Naive thymus-derived CD4-positive, alpha-beta T cell (primary cell): ENCODE measurements at regions of chr3 and their contacts with region 1.

Region 1: DNA sequence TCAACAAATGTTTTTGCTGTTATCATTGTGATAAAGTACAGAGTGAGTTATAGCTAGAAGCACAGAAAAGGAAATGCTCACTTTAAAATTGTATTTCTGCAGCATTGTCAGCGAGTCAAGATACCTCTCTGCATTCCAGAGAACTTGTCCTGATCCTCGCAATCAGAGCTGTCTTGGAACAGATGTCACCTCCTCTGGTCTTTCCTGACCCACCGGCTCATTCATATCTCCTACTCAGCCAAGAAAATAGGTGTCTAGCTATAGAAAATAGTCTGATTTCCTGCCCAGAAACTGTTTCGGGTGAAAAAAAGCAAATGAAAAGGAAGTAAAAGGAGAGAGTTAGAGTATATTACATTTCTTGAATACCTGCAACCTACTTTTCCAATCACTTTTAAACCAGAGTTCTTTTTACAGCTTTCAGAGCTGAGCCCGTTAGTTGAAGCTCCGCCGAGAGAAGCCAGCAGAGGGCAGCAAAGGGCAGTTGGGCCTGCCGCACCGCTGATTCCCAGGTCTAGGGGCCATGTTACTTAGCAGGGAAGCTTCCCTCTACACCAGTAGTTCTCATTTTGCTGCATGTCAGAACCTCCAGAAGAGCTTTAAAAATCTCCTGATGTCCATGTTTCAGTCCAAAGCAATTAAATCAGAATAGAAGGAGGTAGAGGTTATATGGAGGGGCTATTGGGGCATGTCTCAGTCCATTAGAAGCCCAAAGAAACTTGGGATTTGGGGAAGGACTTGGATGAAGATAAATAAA is 185.7 kb upstream of the THRB start:
- DNase-seq: peak in 6 of 9 donors; percentile 2 to 56 (median 8)
- ATAC-seq: peak; percentile 67
- H3K4me3 ChIP-seq: no peak overlapping the region
- H3K4me3 Mint-ChIP-seq: no peak overlapping the region
- H3K27ac ChIP-seq: no peak overlapping the region
- H3K27ac Mint-ChIP-seq: no peak overlapping the region
- H3K4me1 ChIP-seq: no peaks in the 10 kb centered on the region
- H3K4me1 Mint-ChIP-seq: peaks cover 0 to 12% (median 0%) of the 10 kb centered on the region in 7 donors
- H3K27me3 ChIP-seq: no peaks in the 10 kb centered on the region
- H3K27me3 Mint-ChIP-seq: peaks cover 6 to 52% (median 11%) of the 10 kb centered on the region in 5 donors

Region 2: GRCh38 chr3:23999012-23999641 is 681.3 kb before region 1 on chr3:
- CTCF ChIA-PET with region 1: no interaction called
- POLR2A ChIA-PET with region 1: no interaction called
- intact Hi-C with region 1: loop called (anchors 5 kb)
- DNase-seq: peak in 8 of 9 donors; percentile 24 to 64 (median 29)
- ATAC-seq: peak; percentile 49
- H3K4me3 ChIP-seq: no peak overlapping the region
- H3K4me3 Mint-ChIP-seq: no peak overlapping the region
- H3K27ac ChIP-seq: no peak overlapping the region
- H3K27ac Mint-ChIP-seq: no peak overlapping the region
- H3K4me1 ChIP-seq: no peaks in the 10 kb centered on the region
- H3K4me1 Mint-ChIP-seq: peaks cover 0 to 6% (median 4%) of the 10 kb centered on the region in 7 donors
- H3K27me3 ChIP-seq: no peaks in the 10 kb centered on the region
- H3K27me3 Mint-ChIP-seq: peaks cover 0 to 20% (median 3%) of the 10 kb centered on the region in 5 donors

Region 3: GRCh38 chr3:24004171-24004938 is 676.0 kb before region 1 on chr3:
- CTCF ChIA-PET with region 1: no interaction called
- POLR2A ChIA-PET with region 1: no interaction called
- intact Hi-C with region 1: loop called (anchors 5 kb)
- DNase-seq: no peak
- ATAC-seq: no peak
- H3K4me3 ChIP-seq: no peak overlapping the region
- H3K4me3 Mint-ChIP-seq: no peak overlapping the region
- H3K27ac ChIP-seq: no peak overlapping the region
- H3K27ac Mint-ChIP-seq: no peak overlapping the region
- H3K4me1 ChIP-seq: no peaks in the 10 kb centered on the region
- H3K4me1 Mint-ChIP-seq: peaks cover 0 to 4% (median 0%) of the 10 kb centered on the region in 7 donors
- H3K27me3 ChIP-seq: no peaks in the 10 kb centered on the region
- H3K27me3 Mint-ChIP-seq: peaks cover 0 to 13% (median 0%) of the 10 kb centered on the region in 5 donors

Region 4: GRCh38 chr3:24185738-24186384 is 494.5 kb before region 1 on chr3:
- CTCF ChIA-PET with region 1: no interaction called
- POLR2A ChIA-PET with region 1: no interaction called
- intact Hi-C with region 1: loop called in 1 of 2 experiments (anchors 10 kb)
- DNase-seq: peak in 3 of 9 donors; percentile 2 to 10 (median 3)
- ATAC-seq: peak; percentile 38
- H3K4me3 ChIP-seq: no peak overlapping the region
- H3K4me3 Mint-ChIP-seq: no peak overlapping the region
- H3K27ac ChIP-seq: no peak overlapping the region
- H3K27ac Mint-ChIP-seq: no peak overlapping the region
- H3K4me1 ChIP-seq: no peaks in the 10 kb centered on the region
- H3K4me1 Mint-ChIP-seq: no peaks in the 10 kb centered on the region
- H3K27me3 ChIP-seq: no peaks in the 10 kb centered on the region
- H3K27me3 Mint-ChIP-seq: peaks cover 0 to 2% (median 0%) of the 10 kb centered on the region in 5 donors

Region 5: GRCh38 chr3:24264748-24265158 is 415.6 kb before region 1 on chr3:
- CTCF ChIA-PET with region 1: no interaction called
- POLR2A ChIA-PET with region 1: no interaction called
- intact Hi-C with region 1: loop called in 1 of 2 experiments (anchors 2 kb)
- DNase-seq: no peak
- ATAC-seq: no peak
- H3K4me3 ChIP-seq: no peak overlapping the region
- H3K4me3 Mint-ChIP-seq: no peak overlapping the region
- H3K27ac ChIP-seq: no peak overlapping the region
- H3K27ac Mint-ChIP-seq: no peak overlapping the region
- H3K4me1 ChIP-seq: no peaks in the 10 kb centered on the region
- H3K4me1 Mint-ChIP-seq: no peaks in the 10 kb centered on the region
- H3K27me3 ChIP-seq: no peaks in the 10 kb centered on the region
- H3K27me3 Mint-ChIP-seq: peaks cover 3 to 18% (median 12%) of the 10 kb centered on the region in 5 donors

Region 6: DNA sequence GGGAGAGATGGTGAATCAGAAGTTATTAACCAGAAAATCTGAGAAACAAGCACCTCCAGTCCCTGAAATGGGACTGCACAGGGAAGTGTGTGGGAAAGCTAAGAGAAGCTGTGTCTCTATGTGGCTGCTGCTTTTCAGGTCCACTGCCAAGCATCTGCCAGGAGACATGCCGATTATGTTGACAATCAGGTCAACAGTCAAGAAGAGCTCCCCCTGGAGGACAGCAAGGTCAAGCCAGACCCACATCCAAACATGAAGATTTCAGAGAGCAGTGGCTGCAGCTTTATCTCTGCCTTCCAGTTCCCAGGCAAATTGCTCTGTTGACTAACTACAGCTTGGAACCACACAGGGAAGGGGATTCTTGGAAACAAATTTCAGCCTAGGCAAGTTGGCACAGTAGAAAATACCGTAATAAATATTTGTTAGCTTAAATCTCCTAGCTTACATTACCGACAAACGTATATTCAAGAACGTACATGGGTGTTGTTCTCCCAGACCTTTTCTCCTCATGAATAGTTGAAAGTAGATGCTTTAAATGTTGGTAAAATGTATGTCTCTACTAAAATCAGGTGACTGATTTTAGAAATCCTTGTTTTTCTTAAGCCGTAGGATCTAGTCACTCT is 353.1 kb after region 1 on chr3:
- CTCF ChIA-PET with region 1: no interaction called
- POLR2A ChIA-PET with region 1: no interaction called
- intact Hi-C with region 1: loop called in 1 of 2 experiments (anchors 5 kb)
- DNase-seq: no peak
- ATAC-seq: no peak
- H3K4me3 ChIP-seq: no peak overlapping the region
- H3K4me3 Mint-ChIP-seq: no peak overlapping the region
- H3K27ac ChIP-seq: no peak overlapping the region
- H3K27ac Mint-ChIP-seq: no peak overlapping the region
- H3K4me1 ChIP-seq: no peaks in the 10 kb centered on the region
- H3K4me1 Mint-ChIP-seq: no peaks in the 10 kb centered on the region
- H3K27me3 ChIP-seq: no peaks in the 10 kb centered on the region
- H3K27me3 Mint-ChIP-seq: no peaks in the 10 kb centered on the region

Region 7: GRCh38 chr3:25594007-25594502 is 913.7 kb after region 1 on chr3:
- CTCF ChIA-PET with region 1: no interaction called
- POLR2A ChIA-PET with region 1: no interaction called
- intact Hi-C with region 1: loop called (anchors 2 to 10 kb)
- DNase-seq: peak in 7 of 9 donors; percentile 16 to 42 (median 25)
- ATAC-seq: peak; percentile 73
- H3K4me3 ChIP-seq: no peak overlapping the region
- H3K4me3 Mint-ChIP-seq: no peak overlapping the region
- H3K27ac ChIP-seq: no peak overlapping the region
- H3K27ac Mint-ChIP-seq: peak overlapping the region in 7 of 9 donors; percentile 3 to 71 (median 40)
- H3K4me1 ChIP-seq: no peaks in the 10 kb centered on the region
- H3K4me1 Mint-ChIP-seq: peaks cover 0 to 9% (median 6%) of the 10 kb centered on the region in 7 donors
- H3K27me3 ChIP-seq: no peaks in the 10 kb centered on the region
- H3K27me3 Mint-ChIP-seq: no peaks in the 10 kb centered on the region